HepG2 (cell line): ENCODE measurements at regions of chr17 and their contacts with region 1.

Region 1: DNA sequence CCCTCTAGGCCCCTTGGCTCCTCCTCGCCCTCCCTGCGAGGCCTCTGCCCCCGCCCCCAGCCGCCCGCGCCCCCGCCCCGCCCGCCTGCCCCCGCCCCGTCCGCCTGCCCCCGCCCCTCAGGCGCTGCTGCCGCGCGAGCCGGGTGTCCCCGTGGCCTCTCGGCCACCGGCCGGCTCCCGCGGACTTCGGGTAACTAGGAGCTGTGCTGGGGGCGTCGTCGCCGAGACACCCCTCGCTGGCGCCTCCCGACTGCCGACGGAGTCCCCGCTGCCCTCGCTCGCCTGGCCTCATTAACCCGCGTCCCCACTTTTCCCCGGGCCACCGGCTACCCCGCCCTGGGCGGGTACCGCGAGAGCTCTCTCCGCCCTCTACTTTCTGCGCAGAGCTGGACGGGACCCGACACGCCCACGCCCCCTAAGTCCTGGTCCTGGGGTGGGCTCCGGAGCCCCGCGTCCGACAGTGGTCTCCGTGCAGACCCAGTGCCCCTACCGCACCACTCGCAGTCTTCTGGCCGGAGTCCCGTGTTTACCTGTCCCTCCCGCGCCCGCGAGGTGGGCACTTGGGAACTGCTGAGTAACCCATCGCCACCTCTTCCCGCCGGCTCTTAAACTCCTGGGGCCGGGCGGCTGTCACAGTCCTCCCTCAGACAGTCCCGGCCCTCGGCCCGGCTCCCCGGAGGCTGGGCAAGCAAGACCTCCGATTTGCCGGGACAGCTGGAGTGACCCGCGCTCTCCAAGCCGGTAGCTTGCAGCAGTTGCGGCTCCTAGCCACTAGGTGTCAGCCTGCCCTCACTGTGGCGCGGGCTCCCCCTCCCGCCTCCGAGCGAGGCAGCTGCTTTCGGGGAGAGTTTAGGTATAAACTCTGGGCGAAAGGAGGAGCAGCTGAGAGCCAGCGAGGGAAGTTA is at the start of gene TLCD1:
- DNase-seq: peak; percentile 94
- ATAC-seq: peak; percentile 48
- H3K4me3 ChIP-seq: peak within 1 kb of the TSS; percentile 73 to 90 (median 87)
- H3K27ac ChIP-seq: peak within 1 kb of the TSS; percentile 88
- H3K4me1 ChIP-seq: peaks cover 57% of the 10 kb centered on the region
- H3K27me3 ChIP-seq: no peaks in the 10 kb centered on the region; a peak in 1 of 5 replicates
- CTCF ChIP-seq: peak; percentile 99
- EP300 ChIP-seq: no peak
- POLR2A ChIP-seq: no peak
- RAD21 ChIP-seq: peak; percentile 99
- total RNA-seq, gene TLCD1: 9.6 and 19.6 TPM in 2 replicates

Region 2: DNA sequence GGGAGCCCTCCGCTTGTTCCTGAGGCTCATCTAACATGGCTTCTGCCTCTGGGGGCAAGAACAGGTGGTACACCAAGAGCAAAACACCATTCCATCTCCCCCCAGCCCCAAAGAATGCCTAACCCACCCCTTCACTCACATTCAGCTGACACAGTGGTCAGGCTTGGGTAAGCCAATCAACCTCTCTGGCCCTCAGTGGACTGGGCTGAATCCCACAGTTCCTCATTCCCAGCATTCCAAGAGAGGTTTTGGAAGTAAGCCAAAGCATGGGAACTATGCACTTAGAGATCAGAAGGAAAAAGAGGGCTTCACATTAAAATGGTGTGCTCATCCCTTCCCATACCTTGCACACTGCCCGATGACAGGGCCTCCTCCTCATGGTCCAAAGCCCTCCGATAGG is 163.0 kb before region 1 on chr17:
- CTCF ChIA-PET with region 1: no interaction called
- POLR2A ChIA-PET with region 1: no interaction called
- in situ Hi-C with region 1: no loop called
- intact Hi-C with region 1: no loop called
- DNase-seq: peak; percentile 73
- ATAC-seq: peak; percentile 76
- H3K4me3 ChIP-seq: no peak overlapping the region
- H3K27ac ChIP-seq: no peak overlapping the region
- H3K4me1 ChIP-seq: peaks cover 12% of the 10 kb centered on the region
- H3K27me3 ChIP-seq: no peaks in the 10 kb centered on the region
- CTCF ChIP-seq: no peak
- EP300 ChIP-seq: no peak
- POLR2A ChIP-seq: no peak
- RAD21 ChIP-seq: no peak

Region 3: DNA sequence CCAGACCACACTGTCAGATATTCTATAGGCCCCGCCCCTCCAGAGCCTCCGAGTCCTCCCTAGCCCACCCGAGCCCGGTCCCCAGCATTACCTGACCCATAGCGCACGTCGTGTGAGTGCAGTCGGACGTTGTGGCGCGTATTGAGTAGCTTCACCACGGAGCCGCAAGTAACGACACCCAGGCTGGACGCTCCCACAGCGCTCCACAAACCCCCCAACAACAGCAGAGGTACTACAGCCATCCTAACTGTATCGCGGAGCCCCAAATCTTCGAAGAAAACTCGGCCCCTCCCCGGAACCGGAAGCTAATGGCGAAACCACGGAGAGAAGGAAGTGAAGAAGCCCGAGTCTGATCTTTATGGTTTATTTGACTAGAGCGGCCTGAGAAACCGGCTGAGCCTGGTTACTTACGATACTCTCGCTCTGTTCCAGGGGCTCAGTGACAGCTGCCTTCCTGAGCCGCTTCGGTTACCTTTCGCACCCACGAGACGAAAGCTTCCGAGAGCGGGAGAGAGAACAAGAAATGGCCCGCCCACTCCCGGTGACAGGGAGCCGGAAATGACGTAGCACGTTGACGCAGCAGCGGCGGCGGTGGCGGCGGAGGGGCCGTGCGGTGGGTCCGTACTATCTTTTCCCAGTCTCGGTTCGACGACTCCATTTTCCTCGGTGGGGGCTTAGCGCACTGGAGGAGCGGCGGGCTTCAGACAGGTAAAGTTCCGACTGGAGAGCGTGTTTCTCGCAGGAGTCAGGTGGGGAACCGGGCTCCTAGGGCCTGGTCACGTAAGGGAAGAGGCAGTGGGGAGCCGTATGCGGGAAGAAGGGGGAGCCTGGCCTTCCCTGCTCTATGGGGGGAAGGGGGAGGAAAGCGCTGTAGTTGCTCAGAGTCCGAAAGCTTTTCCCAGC is 64.6 kb before region 1 on chr17 and contains the starts of genes SDF2 and SUPT6H:
- CTCF ChIA-PET with region 1: no interaction called
- POLR2A ChIA-PET with region 1: interaction called, 24 read pairs
- in situ Hi-C with region 1: no loop called
- intact Hi-C with region 1: no loop called
- DNase-seq: peak; percentile 81
- ATAC-seq: peak; percentile 92
- H3K4me3 ChIP-seq: peak within 1 kb of the TSS; percentile 73 to 91 (median 88)
- H3K27ac ChIP-seq: peak within 1 kb of the TSS; percentile 91
- H3K4me1 ChIP-seq: peaks cover 52% of the 10 kb centered on the region
- H3K27me3 ChIP-seq: no peaks in the 10 kb centered on the region; a peak in 2 of 5 replicates
- CTCF ChIP-seq: no peak
- EP300 ChIP-seq: no peak
- POLR2A ChIP-seq: peak; percentile 73 to 81
- RAD21 ChIP-seq: no peak
- total RNA-seq, gene SDF2: 39.1 and 58.2 TPM in 2 replicates
- total RNA-seq, gene SUPT6H: 39.9 TPM in 2 replicates

Region 4: DNA sequence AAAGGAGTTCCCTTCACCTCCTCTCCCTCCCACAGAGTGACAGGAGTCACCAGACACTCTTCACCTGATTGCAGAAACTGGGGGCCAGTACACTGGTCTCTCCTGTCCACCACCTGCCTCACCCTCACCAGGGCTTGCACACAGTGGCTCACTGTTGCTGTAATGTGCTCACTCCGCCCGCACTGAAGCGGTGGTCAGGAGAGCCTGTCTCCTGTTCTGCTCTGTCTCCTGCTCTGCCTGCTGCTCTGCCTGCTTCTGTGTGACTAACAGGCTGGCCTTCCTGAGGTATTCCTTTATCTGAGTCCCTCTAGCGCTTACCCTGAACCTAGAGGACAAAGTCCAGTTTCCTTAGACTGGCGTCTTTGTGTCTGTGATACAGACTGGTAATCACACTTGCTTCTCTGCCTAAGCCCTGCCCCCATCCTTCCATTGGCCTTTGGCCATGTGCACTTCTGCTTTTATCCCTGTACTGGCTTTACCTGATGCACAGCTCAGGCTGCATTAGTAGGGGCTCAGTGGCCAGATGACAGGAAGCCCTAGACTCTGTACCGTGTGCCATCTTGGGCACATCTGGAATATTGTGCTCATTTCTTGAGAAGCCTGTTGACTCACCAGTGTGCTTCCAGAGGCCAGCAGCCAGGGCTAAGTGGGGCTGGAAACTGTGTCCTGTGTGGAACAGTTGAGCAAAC is 28.1 kb before region 1 on chr17:
- CTCF ChIA-PET with region 1: no interaction called
- POLR2A ChIA-PET with region 1: interaction called, 220 read pairs
- in situ Hi-C with region 1: no loop called
- intact Hi-C with region 1: loop called (anchors 2 kb)
- DNase-seq: peak; percentile 100
- ATAC-seq: peak; percentile 95
- H3K4me3 ChIP-seq: peak overlapping the region in 1 of 3 experiments; percentile 20; a peak in 1 of 6 replicates
- H3K27ac ChIP-seq: peak overlapping the region; percentile 91
- H3K4me1 ChIP-seq: peaks cover 72% of the 10 kb centered on the region
- H3K27me3 ChIP-seq: no peaks in the 10 kb centered on the region
- CTCF ChIP-seq: peak; percentile 46
- EP300 ChIP-seq: peak; percentile 86 to 87; a peak in 3 of 4 replicates
- POLR2A ChIP-seq: peak; percentile 96 to 99
- RAD21 ChIP-seq: peak; percentile 46

Region 5: GRCh38 chr17:28743225-28744103 is 17.0 kb after region 1 on chr17 and contains the start of gene TRAF4:
- CTCF ChIA-PET with region 1: interaction called, 142 read pairs
- POLR2A ChIA-PET with region 1: interaction called, 590 read pairs
- in situ Hi-C with region 1: no loop called
- intact Hi-C with region 1: loop called (anchors 1 kb)
- DNase-seq: peak; percentile 73
- ATAC-seq: peak; percentile 64
- H3K4me3 ChIP-seq: peak within 1 kb of the TSS; percentile 72 to 93 (median 74)
- H3K27ac ChIP-seq: peak within 1 kb of the TSS; percentile 95
- H3K4me1 ChIP-seq: peaks cover 49% of the 10 kb centered on the region
- H3K27me3 ChIP-seq: no peaks in the 10 kb centered on the region; a peak in 1 of 5 replicates
- CTCF ChIP-seq: no peak
- EP300 ChIP-seq: no peak
- POLR2A ChIP-seq: peak in 1 of 2 experiments; percentile 92; a peak in 3 of 4 replicates
- RAD21 ChIP-seq: peak; percentile 70
- total RNA-seq, gene TRAF4: 56.6 and 89.9 TPM in 2 replicates

Region 6: GRCh38 chr17:28842282-28843012 is 116.0 kb after region 1 on chr17 and contains the start of gene FAM222B:
- CTCF ChIA-PET with region 1: no interaction called
- POLR2A ChIA-PET with region 1: interaction called, 14 read pairs
- in situ Hi-C with region 1: no loop called
- intact Hi-C with region 1: no loop called
- DNase-seq: peak; percentile 79
- ATAC-seq: peak; percentile 98
- H3K4me3 ChIP-seq: peak within 1 kb of the TSS; percentile 73 to 92 (median 74)
- H3K27ac ChIP-seq: peak within 1 kb of the TSS; percentile 59
- H3K4me1 ChIP-seq: peaks cover 20% of the 10 kb centered on the region
- H3K27me3 ChIP-seq: no peaks in the 10 kb centered on the region; a peak in 1 of 5 replicates
- CTCF ChIP-seq: no peak
- EP300 ChIP-seq: no peak
- POLR2A ChIP-seq: peak; percentile 58 to 79
- RAD21 ChIP-seq: no peak
- total RNA-seq, gene FAM222B: 3.5 and 4.7 TPM in 2 replicates

Region 7: DNA sequence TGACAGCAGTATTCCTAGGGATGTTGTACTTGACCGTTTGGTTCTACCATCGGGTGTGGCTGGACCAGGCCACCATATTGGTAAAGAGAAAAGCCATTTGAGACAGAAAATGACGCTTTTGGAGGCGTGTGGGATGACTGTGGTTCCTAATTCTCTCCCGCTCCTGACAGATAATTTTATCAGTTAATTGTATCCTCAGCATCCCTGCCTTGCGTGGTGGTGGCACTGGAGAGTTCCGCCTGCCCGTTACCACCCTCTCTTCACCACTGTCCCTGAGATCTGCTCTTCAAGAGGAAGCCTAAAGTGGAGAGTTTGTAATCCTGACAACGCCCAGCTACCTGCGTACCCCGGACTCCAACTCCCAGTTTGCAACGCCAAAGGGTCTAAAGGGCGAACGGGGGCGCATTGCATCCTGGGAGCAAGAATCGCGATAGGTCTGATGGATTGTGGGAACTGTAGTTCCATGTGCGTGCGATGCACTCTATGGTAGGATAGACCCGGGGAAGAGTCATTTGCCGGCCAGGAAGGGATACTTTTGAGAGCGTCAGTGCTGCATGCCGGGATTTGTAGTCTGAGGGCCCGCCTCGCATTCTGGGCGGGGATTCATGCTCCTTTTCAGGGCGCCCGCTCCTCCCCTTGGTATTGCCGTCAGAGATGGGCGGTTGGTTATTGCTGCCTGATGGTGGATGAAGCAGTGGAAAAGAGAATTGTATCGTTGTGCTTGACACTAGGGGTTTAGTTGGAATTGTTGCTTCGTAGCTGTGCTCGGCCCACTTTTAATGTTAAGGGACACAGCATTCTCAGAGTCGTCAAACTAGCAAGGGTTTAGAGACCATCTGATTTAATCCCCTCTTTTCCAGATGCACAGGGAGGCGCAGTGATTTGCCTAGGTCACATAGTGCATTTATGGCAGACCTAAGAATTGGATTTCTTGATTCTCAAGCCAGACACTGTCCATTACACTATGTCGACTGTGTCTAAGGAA is 225.8 kb after region 1 on chr17:
- CTCF ChIA-PET with region 1: no interaction called
- POLR2A ChIA-PET with region 1: interaction called, 49 read pairs
- in situ Hi-C with region 1: no loop called
- intact Hi-C with region 1: no loop called
- DNase-seq: peak; percentile 99
- ATAC-seq: peak; percentile 86
- H3K4me3 ChIP-seq: peak overlapping the region; percentile 70 to 88 (median 71)
- H3K27ac ChIP-seq: peak overlapping the region; percentile 99
- H3K4me1 ChIP-seq: peaks cover 23% of the 10 kb centered on the region
- H3K27me3 ChIP-seq: no peaks in the 10 kb centered on the region; a peak in 1 of 5 replicates
- CTCF ChIP-seq: no peak
- EP300 ChIP-seq: peak in 1 of 2 experiments; percentile 33; a peak in 1 of 4 replicates
- POLR2A ChIP-seq: peak in 1 of 2 experiments; percentile 81; a peak in 3 of 4 replicates
- RAD21 ChIP-seq: peak; percentile 44; the same call in 1 of the 2 replicates